Natural killer cell (primary cell): ENCODE measurements at regions of chr7 and their contacts with region 1.

Region 1: DNA sequence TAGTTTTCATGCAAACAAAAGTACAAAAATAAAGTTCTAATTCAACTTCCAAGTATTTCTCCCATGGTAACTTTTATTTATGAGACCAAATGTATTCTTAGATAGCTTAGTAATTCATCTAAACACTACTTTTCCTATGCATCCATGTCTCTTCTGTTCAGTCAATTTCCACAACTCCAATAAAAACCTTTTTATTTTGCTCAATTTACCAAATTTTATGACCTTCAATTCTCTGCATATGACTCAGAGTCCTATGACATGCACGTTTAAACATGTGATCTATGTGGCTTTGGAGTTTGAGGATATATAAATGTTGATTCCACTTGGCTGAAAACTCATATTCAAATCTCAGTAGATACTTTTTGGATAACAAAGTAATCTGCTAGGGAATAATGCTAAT is 40.4 kb upstream of the GNAT3 start:
- DNase-seq: no peak
- ATAC-seq: no peak
- H3K4me3 ChIP-seq: no peak overlapping the region
- H3K4me3 Mint-ChIP-seq: no peak overlapping the region
- H3K27ac ChIP-seq: no peak overlapping the region
- H3K27ac Mint-ChIP-seq: no peak overlapping the region
- H3K4me1 ChIP-seq: no peaks in the 10 kb centered on the region
- H3K4me1 Mint-ChIP-seq: no peaks in the 10 kb centered on the region
- H3K27me3 ChIP-seq: no peaks in the 10 kb centered on the region
- H3K27me3 Mint-ChIP-seq: no peaks in the 10 kb centered on the region
- CTCF ChIP-seq: no peak

Region 2: DNA sequence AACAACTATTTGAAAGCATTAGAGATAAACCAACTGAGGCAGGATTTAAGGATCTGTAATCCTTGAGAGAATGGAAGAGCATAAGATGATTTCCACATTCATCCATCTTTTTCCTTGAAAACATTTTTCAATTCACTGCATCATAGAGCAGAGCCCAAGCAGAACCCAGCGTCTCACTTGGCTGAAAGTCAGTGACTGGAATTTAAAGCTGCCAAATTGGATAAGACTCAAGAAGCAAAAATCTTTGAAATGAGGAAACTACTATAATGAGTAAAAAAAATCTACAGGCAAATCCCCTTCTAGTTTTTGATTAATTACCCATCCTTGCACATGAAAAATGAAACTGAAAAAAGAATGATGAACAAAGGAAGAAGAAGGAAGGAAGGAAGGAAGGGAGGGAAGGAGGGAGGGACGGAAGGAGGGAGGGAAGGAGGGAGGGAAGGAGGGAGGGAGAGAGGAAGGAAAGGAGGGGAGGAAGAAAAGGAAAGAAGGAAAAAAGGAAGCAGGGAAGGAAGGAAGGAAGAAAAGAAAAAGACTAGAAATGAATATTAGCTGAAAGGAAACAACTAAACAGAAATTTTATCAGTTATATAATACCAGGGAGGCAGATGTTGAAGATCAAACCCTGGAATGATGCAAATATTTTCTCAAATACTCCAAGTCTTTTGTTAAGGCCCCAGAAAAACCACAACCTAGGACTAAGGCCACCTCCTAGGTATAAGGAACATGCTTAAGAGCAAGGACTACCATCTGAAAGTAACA is 762.5 kb before region 1 on chr7:
- intact Hi-C with region 1: loop called (anchors 5 kb)
- DNase-seq: no peak
- ATAC-seq: no peak
- H3K4me3 ChIP-seq: no peak overlapping the region
- H3K4me3 Mint-ChIP-seq: no peak overlapping the region
- H3K27ac ChIP-seq: no peak overlapping the region
- H3K27ac Mint-ChIP-seq: no peak overlapping the region
- H3K4me1 ChIP-seq: no peaks in the 10 kb centered on the region
- H3K4me1 Mint-ChIP-seq: no peaks in the 10 kb centered on the region
- H3K27me3 ChIP-seq: no peaks in the 10 kb centered on the region
- H3K27me3 Mint-ChIP-seq: no peaks in the 10 kb centered on the region
- CTCF ChIP-seq: no peak

Region 3: DNA sequence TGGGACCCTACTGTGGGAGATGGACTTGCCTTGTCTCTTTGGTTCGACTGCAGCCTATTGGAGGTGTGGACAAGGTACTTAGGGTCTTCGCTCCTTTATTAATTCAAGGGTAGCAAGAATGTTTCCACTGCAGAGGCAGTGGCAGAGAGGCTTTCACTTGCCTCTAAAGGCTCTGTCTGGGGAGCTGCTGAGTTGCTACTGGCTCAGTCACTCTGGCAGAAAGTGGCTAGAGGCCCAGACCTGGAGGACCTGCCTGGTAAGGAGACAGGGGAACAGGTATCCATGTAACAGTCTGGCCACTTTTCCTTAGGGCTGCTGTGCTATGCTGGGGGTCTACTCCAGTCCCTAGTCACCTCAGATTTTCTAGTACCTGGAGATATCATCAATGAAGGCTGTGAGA is 12.2 kb after region 1 on chr7:
- intact Hi-C with region 1: loop called (anchors 1 kb)
- DNase-seq: no peak
- ATAC-seq: no peak
- H3K4me3 ChIP-seq: no peak overlapping the region
- H3K4me3 Mint-ChIP-seq: no peak overlapping the region
- H3K27ac ChIP-seq: no peak overlapping the region
- H3K27ac Mint-ChIP-seq: no peak overlapping the region
- H3K4me1 ChIP-seq: peaks cover 19% of the 10 kb centered on the region
- H3K4me1 Mint-ChIP-seq: peaks cover 6 to 8% of the 10 kb centered on the region in 2 donors
- H3K27me3 ChIP-seq: no peaks in the 10 kb centered on the region
- H3K27me3 Mint-ChIP-seq: no peaks in the 10 kb centered on the region
- CTCF ChIP-seq: no peak